ENCODE measurements at regions of chr10 and their contacts with region 1.

Region 1: GRCh38 chr10:29555746-29556481 is 78.9 kb downstream of the SVIL start:
- DNase-seq: no peak
- H3K4me3 ChIP-seq: no peak overlapping the region
- H3K27ac ChIP-seq: no peak overlapping the region
- H3K4me1 ChIP-seq: peaks cover 0 to 8% (median 5%) of the 10 kb centered on the region in 4 experiments; a peak in 3 of 7 replicates
- H3K27me3 ChIP-seq: no peaks in the 10 kb centered on the region
- CTCF ChIP-seq: no peak
- EP300 ChIP-seq: no peak
- POLR2A ChIP-seq: no peak
- RAD21 ChIP-seq: no peak

Region 2: GRCh38 chr10:29543715-29544114 is 12.2 kb before region 1 on chr10:
- CTCF ChIA-PET with region 1: interaction called, 11 read pairs
- POLR2A ChIA-PET with region 1: no interaction called
- DNase-seq: no peak
- H3K4me3 ChIP-seq: no peak overlapping the region
- H3K27ac ChIP-seq: no peak overlapping the region
- H3K4me1 ChIP-seq: peaks cover 0 to 7% (median 3%) of the 10 kb centered on the region in 4 experiments; a peak in 2 of 7 replicates
- H3K27me3 ChIP-seq: no peaks in the 10 kb centered on the region
- CTCF ChIP-seq: no peak
- EP300 ChIP-seq: no peak
- POLR2A ChIP-seq: no peak
- RAD21 ChIP-seq: no peak

Region 3: GRCh38 chr10:29569795-29570194 is 13.9 kb after region 1 on chr10:
- CTCF ChIA-PET with region 1: interaction called, 11 read pairs
- POLR2A ChIA-PET with region 1: no interaction called
- DNase-seq: no peak
- H3K4me3 ChIP-seq: no peak overlapping the region
- H3K27ac ChIP-seq: no peak overlapping the region
- H3K4me1 ChIP-seq: peaks cover 0 to 9% (median 2%) of the 10 kb centered on the region in 4 experiments; a peak in 3 of 7 replicates
- H3K27me3 ChIP-seq: no peaks in the 10 kb centered on the region
- CTCF ChIP-seq: no peak
- EP300 ChIP-seq: no peak
- POLR2A ChIP-seq: no peak
- RAD21 ChIP-seq: no peak

Region 4: GRCh38 chr10:29675984-29676383 is 120.1 kb after region 1 on chr10:
- CTCF ChIA-PET with region 1: no interaction called
- POLR2A ChIA-PET with region 1: no interaction called
- DNase-seq: no peak
- H3K4me3 ChIP-seq: no peak overlapping the region
- H3K27ac ChIP-seq: no peak overlapping the region
- H3K4me1 ChIP-seq: no peaks in the 10 kb centered on the region
- H3K27me3 ChIP-seq: no peaks in the 10 kb centered on the region
- CTCF ChIP-seq: no peak
- EP300 ChIP-seq: no peak
- POLR2A ChIP-seq: no peak
- RAD21 ChIP-seq: no peak

Measured in H1 (cell line).